ENCODE measurements at regions of chr7 and their contacts with region 1.

Region 1: DNA sequence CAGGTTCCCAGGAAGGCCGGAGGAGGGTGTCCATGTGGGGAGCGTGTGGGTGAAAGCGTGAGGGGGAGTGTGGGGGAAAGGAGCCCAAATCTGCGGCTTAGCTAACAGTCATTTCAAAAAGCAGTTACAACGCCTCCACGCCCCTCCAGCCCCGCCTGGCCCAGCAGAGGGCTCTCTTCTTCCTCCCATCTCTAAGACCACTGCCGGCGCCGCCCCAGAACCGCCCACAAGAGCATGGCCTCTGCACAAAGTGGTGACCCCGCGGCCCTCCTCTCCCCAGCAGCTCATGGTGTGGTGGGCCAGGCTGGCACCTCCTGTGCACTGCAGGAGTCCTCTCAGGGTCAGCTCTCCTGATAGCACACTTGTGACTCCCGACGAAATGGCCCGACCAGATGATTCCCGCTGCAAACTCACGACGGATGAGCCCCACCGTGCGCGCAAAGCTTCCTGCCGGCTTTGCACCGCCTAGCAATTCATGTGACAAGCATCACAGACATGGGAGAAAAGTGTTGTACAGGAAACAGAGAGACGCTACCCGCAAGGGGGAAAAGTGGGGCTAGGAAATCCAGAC is 12.4 kb upstream of the HUS1 start:
- DNase-seq: peak; percentile 94
- H3K4me3 Mint-ChIP-seq: peak overlapping the region; percentile 77
- H3K27ac Mint-ChIP-seq: peak overlapping the region; percentile 76
- H3K4me1 Mint-ChIP-seq: peaks cover 37% of the 10 kb centered on the region
- H3K27me3 Mint-ChIP-seq: no peaks in the 10 kb centered on the region
- CTCF ChIP-seq: peak; percentile 82

Region 2: GRCh38 chr7:47581806-47582763 is 409.7 kb before region 1 on chr7 and contains the start of gene TNS3:
- CTCF ChIA-PET with region 1: no interaction called
- intact Hi-C with region 1: no loop called
- DNase-seq: peak; percentile 86
- H3K4me3 Mint-ChIP-seq: peak within 1 kb of the TSS; percentile 100
- H3K27ac Mint-ChIP-seq: peak within 1 kb of the TSS; percentile 88
- H3K4me1 Mint-ChIP-seq: peaks cover 55% of the 10 kb centered on the region
- H3K27me3 Mint-ChIP-seq: no peaks in the 10 kb centered on the region
- CTCF ChIP-seq: peak; percentile 36
- total RNA-seq, gene TNS3: 102 and 135 TPM in 2 replicates

Region 3: DNA sequence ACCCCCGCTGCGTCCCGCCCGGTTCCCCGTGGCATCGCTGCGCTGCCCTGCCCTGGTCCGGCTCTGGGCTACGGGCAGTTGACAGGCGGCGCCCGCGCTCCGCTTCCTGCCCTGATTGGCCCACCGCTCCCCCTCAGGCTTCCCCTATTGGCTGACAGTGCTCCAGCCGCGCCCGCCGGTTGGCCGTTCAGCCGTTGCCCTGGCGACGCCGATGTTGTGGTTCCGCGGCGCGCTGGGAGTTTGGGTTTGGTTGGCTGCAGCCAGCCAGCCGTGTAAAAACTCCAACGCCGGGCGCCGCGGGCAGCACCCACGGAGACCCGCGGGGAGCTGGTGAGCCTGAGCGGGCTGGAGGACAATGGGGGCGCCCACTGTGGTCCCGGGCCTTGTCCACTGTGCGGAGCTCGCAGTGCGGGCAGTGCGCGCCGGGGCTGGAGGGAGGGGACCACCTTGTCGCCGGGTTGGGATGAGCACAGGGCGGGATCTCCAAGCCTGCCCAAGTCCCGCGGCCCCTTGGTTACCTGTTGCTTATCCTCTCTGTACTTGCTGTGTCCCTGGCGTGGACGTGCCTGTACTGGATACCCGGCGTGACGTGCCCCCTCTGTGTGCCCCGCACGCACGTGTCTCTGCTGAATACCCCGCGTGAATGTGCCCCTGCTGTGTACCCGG is 43.6 kb after region 1 on chr7 and contains the start of gene C7orf57:
- CTCF ChIA-PET with region 1: no interaction called
- intact Hi-C with region 1: loop called (anchors 5 kb)
- DNase-seq: peak; percentile 98
- H3K4me3 Mint-ChIP-seq: peak within 1 kb of the TSS; percentile 93
- H3K27ac Mint-ChIP-seq: peak within 1 kb of the TSS; percentile 80
- H3K4me1 Mint-ChIP-seq: peaks cover 14% of the 10 kb centered on the region
- H3K27me3 Mint-ChIP-seq: peaks cover 30% of the 10 kb centered on the region
- CTCF ChIP-seq: no peak
- total RNA-seq, gene C7orf57: 0.24 and 0.33 TPM in 2 replicates

Region 4: GRCh38 chr7:48088559-48089045 is 96.8 kb after region 1 on chr7:
- CTCF ChIA-PET with region 1: interaction called, 14 read pairs
- intact Hi-C with region 1: loop called (anchors 2 kb)
- DNase-seq: peak; percentile 98
- H3K4me3 Mint-ChIP-seq: peak overlapping the region; percentile 82
- H3K27ac Mint-ChIP-seq: peak overlapping the region; percentile 82
- H3K4me1 Mint-ChIP-seq: peaks cover 79% of the 10 kb centered on the region
- H3K27me3 Mint-ChIP-seq: no peaks in the 10 kb centered on the region
- CTCF ChIP-seq: no peak

Region 5: GRCh38 chr7:48109848-48110663 is 118.2 kb after region 1 on chr7:
- CTCF ChIA-PET with region 1: interaction called, 49 read pairs
- intact Hi-C with region 1: loop called (anchors 1 kb)
- DNase-seq: peak; percentile 93
- H3K4me3 Mint-ChIP-seq: no peak overlapping the region
- H3K27ac Mint-ChIP-seq: peak overlapping the region; percentile 45
- H3K4me1 Mint-ChIP-seq: peaks cover 12% of the 10 kb centered on the region
- H3K27me3 Mint-ChIP-seq: no peaks in the 10 kb centered on the region
- CTCF ChIP-seq: peak; percentile 100

Region 6: GRCh38 chr7:48154792-48155413 is 163.1 kb after region 1 on chr7:
- CTCF ChIA-PET with region 1: interaction called, 13 read pairs
- intact Hi-C with region 1: loop called (anchors 5 kb)
- DNase-seq: peak; percentile 79
- H3K4me3 Mint-ChIP-seq: no peak overlapping the region
- H3K27ac Mint-ChIP-seq: peak overlapping the region; percentile 13
- H3K4me1 Mint-ChIP-seq: no peaks in the 10 kb centered on the region
- H3K27me3 Mint-ChIP-seq: peaks cover 8% of the 10 kb centered on the region
- CTCF ChIP-seq: peak; percentile 88

Region 7: GRCh38 chr7:48245751-48246472 is 254.1 kb after region 1 on chr7:
- CTCF ChIA-PET with region 1: no interaction called
- intact Hi-C with region 1: loop called (anchors 5 kb)
- DNase-seq: no peak
- H3K4me3 Mint-ChIP-seq: no peak overlapping the region
- H3K27ac Mint-ChIP-seq: no peak overlapping the region
- H3K4me1 Mint-ChIP-seq: peaks cover 31% of the 10 kb centered on the region
- H3K27me3 Mint-ChIP-seq: no peaks in the 10 kb centered on the region
- CTCF ChIP-seq: no peak